ENCODE measurements at regions of chr12 and their contacts with region 1.

Region 1: GRCh38 chr12:109110988-109111495 is 5.3 kb upstream of the ACACB start:
- DNase-seq: peak; percentile 28
- H3K4me3 ChIP-seq: peak overlapping the region; percentile 67
- H3K27me3 ChIP-seq: no peaks in the 10 kb centered on the region
- CTCF ChIP-seq: no peak

Region 2: DNA sequence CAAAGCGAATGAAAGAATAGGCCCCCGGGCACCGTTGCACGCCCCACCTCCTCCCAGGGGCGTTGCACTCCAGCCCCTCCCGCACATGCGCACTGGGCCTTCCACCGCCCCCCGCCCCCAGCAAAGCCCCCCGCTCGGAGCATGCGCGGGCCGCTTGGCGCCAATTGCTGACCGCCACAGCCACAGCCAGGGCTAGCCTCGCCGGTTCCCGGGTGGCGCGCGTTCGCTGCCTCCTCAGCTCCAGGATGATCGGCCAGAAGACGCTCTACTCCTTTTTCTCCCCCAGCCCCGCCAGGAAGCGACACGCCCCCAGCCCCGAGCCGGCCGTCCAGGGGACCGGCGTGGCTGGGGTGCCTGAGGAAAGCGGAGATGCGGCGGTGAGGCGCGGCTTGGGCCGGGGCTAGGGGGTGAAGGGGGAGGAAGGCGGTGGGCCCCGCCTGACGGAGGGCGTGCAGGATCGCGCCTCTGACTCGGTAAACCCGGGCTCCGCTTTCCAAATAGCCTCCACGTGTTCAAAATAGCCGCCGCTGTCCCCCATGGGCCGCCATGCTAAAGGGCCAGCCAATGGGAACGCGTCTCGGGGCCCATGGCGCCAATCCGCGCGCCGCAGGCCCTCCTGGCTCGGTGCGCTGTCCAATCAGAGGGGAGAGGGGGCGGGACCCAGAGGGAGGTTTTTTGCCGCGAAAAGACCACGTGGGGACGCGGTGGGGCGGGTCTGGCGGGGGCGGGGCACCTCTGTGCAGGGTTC is 13.4 kb before region 1 on chr12 and contains the start of gene UNG:
- CTCF ChIA-PET with region 1: interaction called, 32 read pairs
- POLR2A ChIA-PET with region 1: no interaction called
- DNase-seq: peak; percentile 63
- H3K4me3 ChIP-seq: peak within 1 kb of the TSS; percentile 79
- H3K27me3 ChIP-seq: no peaks in the 10 kb centered on the region
- CTCF ChIP-seq: no peak
- polyA plus RNA-seq, gene UNG: 10.4 and 11.7 TPM in 2 replicates

Region 3: GRCh38 chr12:109121346-109121880 is 10.4 kb after region 1 on chr12:
- CTCF ChIA-PET with region 1: interaction called, 17 read pairs
- POLR2A ChIA-PET with region 1: interaction called, 3 read pairs
- DNase-seq: no peak
- H3K4me3 ChIP-seq: no peak overlapping the region
- H3K27me3 ChIP-seq: no peaks in the 10 kb centered on the region
- CTCF ChIP-seq: no peak

Region 4: GRCh38 chr12:109134186-109134917 is 23.3 kb after region 1 on chr12:
- CTCF ChIA-PET with region 1: interaction called, 14 read pairs
- POLR2A ChIA-PET with region 1: no interaction called
- DNase-seq: no peak
- H3K4me3 ChIP-seq: no peak overlapping the region
- H3K27me3 ChIP-seq: no peaks in the 10 kb centered on the region; the same call in 1 of the 2 replicates
- CTCF ChIP-seq: peak; percentile 72

Region 5: GRCh38 chr12:109385339-109386067 is 274.5 kb after region 1 on chr12:
- CTCF ChIA-PET with region 1: interaction called, 28 read pairs
- POLR2A ChIA-PET with region 1: no interaction called
- DNase-seq: peak; percentile 27
- H3K4me3 ChIP-seq: no peak overlapping the region
- H3K27me3 ChIP-seq: peaks cover 2% of the 10 kb centered on the region; the same call in 1 of the 2 replicates
- CTCF ChIP-seq: peak; percentile 59

Region 6: DNA sequence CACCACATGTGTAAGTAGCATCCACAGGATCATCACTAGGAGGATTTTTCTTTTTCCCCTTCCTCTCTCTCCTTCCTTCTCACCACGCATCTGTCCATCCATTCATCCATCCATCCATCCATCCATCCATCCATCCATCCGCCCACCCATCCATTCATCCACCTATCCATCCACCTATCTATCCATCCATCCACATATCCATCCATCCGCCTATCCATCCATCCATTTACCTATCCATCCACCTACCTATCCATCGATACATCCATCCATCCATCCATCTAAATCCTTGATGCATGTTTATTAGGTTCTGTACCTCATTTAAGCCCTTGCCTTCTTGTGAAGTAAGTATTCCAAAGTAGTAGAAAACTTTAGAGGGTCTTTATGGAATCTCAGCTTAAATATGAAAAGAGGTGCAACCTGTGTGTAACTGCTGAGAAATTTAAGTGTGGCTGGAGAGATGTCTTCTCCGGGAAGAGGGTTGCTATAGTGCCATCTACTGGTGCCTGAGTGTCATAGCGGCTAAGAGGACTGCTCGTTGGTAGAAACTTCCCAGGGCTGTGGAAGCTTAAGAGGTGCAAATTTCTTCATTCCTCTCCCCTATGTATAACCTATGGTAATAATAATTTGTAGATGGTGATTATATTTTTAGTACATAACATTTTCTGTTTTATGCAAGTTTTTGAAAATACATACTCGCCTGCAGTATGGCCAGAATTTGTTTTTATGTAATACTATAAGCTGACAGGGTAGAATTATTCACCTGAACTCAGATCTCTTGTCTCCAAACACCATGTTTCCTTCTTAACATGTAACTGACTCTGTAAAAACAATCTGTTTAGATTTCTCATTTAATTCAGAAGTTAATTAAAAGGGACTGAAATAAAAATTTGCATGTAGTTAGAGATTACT is 282.6 kb after region 1 on chr12:
- CTCF ChIA-PET with region 1: interaction called, 41 read pairs
- POLR2A ChIA-PET with region 1: no interaction called
- DNase-seq: no peak
- H3K4me3 ChIP-seq: no peak overlapping the region
- H3K27me3 ChIP-seq: no peaks in the 10 kb centered on the region
- CTCF ChIP-seq: peak; percentile 93